ENCODE measurements at regions of chr1 and their contacts with region 1.

Region 1: GRCh38 chr1:58968360-58968952 is 184.6 kb upstream of the JUN start:
- DNase-seq: peak; percentile 82 to 87 (median 85)
- ATAC-seq: peak; percentile 62 to 85 (median 78)
- H3K4me3 ChIP-seq: no peak overlapping the region
- H3K27ac ChIP-seq: peak overlapping the region; percentile 18 to 89 (median 80)
- H3K4me1 ChIP-seq: peaks cover 0 to 34% (median 18%) of the 10 kb centered on the region in 12 donors
- H3K27me3 ChIP-seq: no peaks in the 10 kb centered on the region
- CTCF ChIP-seq: no peak
- POLR2A ChIP-seq: no peak

Region 2: DNA sequence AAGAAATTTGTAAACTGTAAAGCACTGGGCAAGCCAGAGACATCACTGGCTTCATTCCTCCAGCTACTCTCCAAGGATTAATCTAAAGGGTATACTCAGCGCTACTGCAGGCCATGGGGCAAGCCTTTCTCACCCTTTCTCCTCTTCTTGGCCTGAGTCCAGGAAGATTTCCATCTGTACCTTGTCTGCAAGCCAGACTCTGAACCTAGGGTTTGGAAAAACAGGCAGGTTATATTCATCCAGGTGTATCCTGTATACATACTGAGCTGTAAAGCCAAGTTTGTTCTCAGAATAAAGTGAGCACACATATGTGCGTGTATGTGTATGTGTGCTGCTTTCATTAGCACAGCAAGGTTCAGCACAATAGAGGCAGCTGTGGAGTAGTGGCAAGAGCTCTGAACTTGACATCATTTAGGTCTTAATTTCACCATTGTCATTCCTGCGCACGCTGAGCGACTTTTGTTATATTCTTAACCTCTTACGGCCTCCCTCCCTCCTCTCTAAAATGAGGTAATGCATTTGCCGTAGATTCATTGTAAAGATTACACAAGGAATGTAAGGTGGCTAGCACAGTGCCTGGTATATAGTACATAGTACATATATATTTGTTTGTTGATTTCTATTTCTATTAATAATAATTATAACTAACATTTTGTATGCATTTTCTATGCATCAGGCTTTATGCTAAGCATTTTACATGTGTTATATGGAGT is 56.5 kb before region 1 on chr1:
- intact Hi-C with region 1: loop called in 1 of 10 experiments (anchors 5 kb)
- DNase-seq: no peak
- ATAC-seq: no peak
- H3K4me3 ChIP-seq: no peak overlapping the region
- H3K27ac ChIP-seq: no peak overlapping the region
- H3K4me1 ChIP-seq: peaks cover 0 to 11% (median 0%) of the 10 kb centered on the region in 12 donors
- H3K27me3 ChIP-seq: no peaks in the 10 kb centered on the region
- CTCF ChIP-seq: no peak
- POLR2A ChIP-seq: no peak

Region 3: GRCh38 chr1:59013276-59013927 is 44.9 kb after region 1 on chr1:
- intact Hi-C with region 1: loop called in 1 of 10 experiments (anchors 5 kb)
- DNase-seq: peak; percentile 33 to 65 (median 46)
- ATAC-seq: peak; percentile 40 to 77 (median 69)
- H3K4me3 ChIP-seq: peak overlapping the region in 5 of 12 donors; percentile 4 to 34 (median 23)
- H3K27ac ChIP-seq: peak overlapping the region; percentile 68 to 88 (median 80)
- H3K4me1 ChIP-seq: peaks cover 6 to 51% (median 24%) of the 10 kb centered on the region in 12 donors
- H3K27me3 ChIP-seq: no peaks in the 10 kb centered on the region
- CTCF ChIP-seq: no peak
- POLR2A ChIP-seq: no peak

Region 4: DNA sequence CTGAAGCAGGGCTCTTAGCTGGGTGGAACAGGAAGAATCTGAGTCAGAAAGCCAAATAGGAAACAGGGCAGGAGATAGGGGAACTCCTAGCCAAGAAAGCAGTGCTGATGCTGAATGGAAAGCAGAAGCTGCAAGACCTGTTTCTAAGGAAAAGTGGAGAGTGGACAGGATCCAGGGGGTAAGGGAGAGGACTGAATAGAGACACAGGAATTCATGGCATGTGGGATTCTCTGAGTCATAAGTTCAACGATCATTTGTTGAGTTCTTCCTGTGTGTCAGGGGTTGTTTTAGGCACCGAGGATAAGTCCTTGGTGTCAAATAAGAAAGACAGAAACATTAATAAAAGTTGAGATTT is 174.7 kb after region 1 on chr1:
- intact Hi-C with region 1: loop called in 1 of 10 experiments (anchors 5 kb)
- DNase-seq: peak in 2 of 5 donors; percentile 23 to 41
- ATAC-seq: peak in 3 of 4 donors; percentile 25 to 43 (median 32)
- H3K4me3 ChIP-seq: no peak overlapping the region
- H3K27ac ChIP-seq: peak overlapping the region in 10 of 12 donors; percentile 2 to 91 (median 80)
- H3K4me1 ChIP-seq: peaks cover 6 to 74% (median 55%) of the 10 kb centered on the region in 12 donors
- H3K27me3 ChIP-seq: no peaks in the 10 kb centered on the region
- CTCF ChIP-seq: no peak
- POLR2A ChIP-seq: no peak